Activated T-helper 2 cell treated with anti-CD3 and anti-CD28 coated beads, Interferon-gamma antibody, Interleukin-2, Interleukin-4, amounts not matched to agents 10 μg/mL and 5 μg/mL and 100 μg/mL, durations not matched to agents 14 hours and 24 hours and 36 hours (primary cell): ENCODE measurements at regions of chr6 and their contacts with region 1.

Region 1: GRCh38 chr6:52162940-52163908 is 23.0 kb upstream of the IL17A start:
- DNase-seq: no peak
- H3K4me3 Mint-ChIP-seq: no peak overlapping the region
- H3K27ac Mint-ChIP-seq: peak overlapping the region; percentile 87
- H3K4me1 Mint-ChIP-seq: peaks cover 35% of the 10 kb centered on the region
- H3K27me3 Mint-ChIP-seq: peaks cover 35% of the 10 kb centered on the region

Region 2: GRCh38 chr6:51553246-51554015 is 609.8 kb before region 1 on chr6:
- intact Hi-C with region 1: no loop called
- DNase-seq: no peak
- H3K4me3 Mint-ChIP-seq: no peak overlapping the region
- H3K27ac Mint-ChIP-seq: no peak overlapping the region
- H3K4me1 Mint-ChIP-seq: no peaks in the 10 kb centered on the region
- H3K27me3 Mint-ChIP-seq: no peaks in the 10 kb centered on the region

Region 3: DNA sequence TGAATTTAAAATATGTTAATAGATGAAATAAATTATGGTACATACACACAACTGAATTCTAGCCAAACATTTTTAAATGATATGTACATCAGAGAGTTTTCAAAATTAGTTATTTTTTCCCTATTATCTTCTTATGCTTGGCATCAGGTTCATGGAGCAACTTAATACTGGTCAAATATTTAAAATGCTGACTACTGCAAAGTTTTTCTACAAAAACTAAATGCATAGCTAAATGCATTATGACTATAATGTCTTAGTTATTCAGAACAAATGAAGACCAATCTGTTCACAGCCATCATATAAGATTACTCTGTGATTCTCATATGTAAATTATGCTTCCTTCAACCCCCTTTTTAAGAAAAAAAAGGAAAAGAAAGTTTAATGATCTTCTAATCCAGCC is 14.7 kb after region 1 on chr6:
- intact Hi-C with region 1: loop called (anchors 2 kb)
- DNase-seq: no peak
- H3K4me3 Mint-ChIP-seq: no peak overlapping the region
- H3K27ac Mint-ChIP-seq: no peak overlapping the region
- H3K4me1 Mint-ChIP-seq: peaks cover 14% of the 10 kb centered on the region
- H3K27me3 Mint-ChIP-seq: peaks cover 72% of the 10 kb centered on the region

Region 4: GRCh38 chr6:52233975-52234823 is 71.0 kb after region 1 on chr6:
- intact Hi-C with region 1: loop called (anchors 1 kb)
- DNase-seq: no peak
- H3K4me3 Mint-ChIP-seq: no peak overlapping the region
- H3K27ac Mint-ChIP-seq: no peak overlapping the region
- H3K4me1 Mint-ChIP-seq: peaks cover 18% of the 10 kb centered on the region
- H3K27me3 Mint-ChIP-seq: peaks cover 72% of the 10 kb centered on the region

Region 5: GRCh38 chr6:52263709-52264540 is 100.7 kb after region 1 on chr6:
- intact Hi-C with region 1: loop called (anchors 1 kb)
- DNase-seq: peak; percentile 66
- H3K4me3 Mint-ChIP-seq: no peak overlapping the region
- H3K27ac Mint-ChIP-seq: no peak overlapping the region
- H3K4me1 Mint-ChIP-seq: peaks cover 6% of the 10 kb centered on the region
- H3K27me3 Mint-ChIP-seq: no peaks in the 10 kb centered on the region

Region 6: GRCh38 chr6:52537001-52537753 is 374.0 kb after region 1 on chr6:
- intact Hi-C with region 1: loop called (anchors 5 kb)
- DNase-seq: peak; percentile 18
- H3K4me3 Mint-ChIP-seq: no peak overlapping the region
- H3K27ac Mint-ChIP-seq: peak overlapping the region; percentile 19
- H3K4me1 Mint-ChIP-seq: peaks cover 51% of the 10 kb centered on the region
- H3K27me3 Mint-ChIP-seq: no peaks in the 10 kb centered on the region

Region 7: GRCh38 chr6:52664186-52664990 is 501.2 kb after region 1 on chr6:
- intact Hi-C with region 1: loop called (anchors 5 kb)
- DNase-seq: peak; percentile 78
- H3K4me3 Mint-ChIP-seq: no peak overlapping the region
- H3K27ac Mint-ChIP-seq: no peak overlapping the region
- H3K4me1 Mint-ChIP-seq: peaks cover 16% of the 10 kb centered on the region
- H3K27me3 Mint-ChIP-seq: no peaks in the 10 kb centered on the region